ENCODE measurements at regions of chr11 and their contacts with region 1.

Region 1: GRCh38 chr11:132414451-132414850 is 1044.0 kb downstream of the NTM start:
- DNase-seq: no peak
- H3K4me3 ChIP-seq: no peak overlapping the region
- CTCF ChIP-seq: no peak

Region 2: DNA sequence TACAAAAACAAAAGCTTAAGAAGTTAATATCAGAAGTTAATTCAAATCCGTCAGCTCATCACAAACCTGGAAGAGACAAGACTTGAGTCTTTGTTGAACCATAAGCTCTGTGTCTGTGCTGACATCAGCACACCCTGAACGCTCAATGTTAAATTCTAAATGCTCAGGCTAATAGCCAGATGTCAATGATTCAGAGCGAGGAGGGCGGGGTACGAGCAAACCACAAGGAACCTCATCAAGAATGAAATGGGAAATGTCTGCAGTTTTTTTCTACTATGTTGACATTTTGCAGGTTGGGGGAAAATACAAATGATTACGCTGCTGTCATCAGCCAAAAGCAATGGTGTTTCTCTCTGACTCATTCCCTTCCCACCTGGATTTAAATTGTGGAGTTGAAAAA is 13.2 kb after region 1 on chr11:
- CTCF ChIA-PET with region 1: interaction called, 11 read pairs
- POLR2A ChIA-PET with region 1: interaction called, 5 read pairs
- DNase-seq: peak; percentile 44
- H3K4me3 ChIP-seq: no peak overlapping the region
- CTCF ChIP-seq: no peak

Region 3: DNA sequence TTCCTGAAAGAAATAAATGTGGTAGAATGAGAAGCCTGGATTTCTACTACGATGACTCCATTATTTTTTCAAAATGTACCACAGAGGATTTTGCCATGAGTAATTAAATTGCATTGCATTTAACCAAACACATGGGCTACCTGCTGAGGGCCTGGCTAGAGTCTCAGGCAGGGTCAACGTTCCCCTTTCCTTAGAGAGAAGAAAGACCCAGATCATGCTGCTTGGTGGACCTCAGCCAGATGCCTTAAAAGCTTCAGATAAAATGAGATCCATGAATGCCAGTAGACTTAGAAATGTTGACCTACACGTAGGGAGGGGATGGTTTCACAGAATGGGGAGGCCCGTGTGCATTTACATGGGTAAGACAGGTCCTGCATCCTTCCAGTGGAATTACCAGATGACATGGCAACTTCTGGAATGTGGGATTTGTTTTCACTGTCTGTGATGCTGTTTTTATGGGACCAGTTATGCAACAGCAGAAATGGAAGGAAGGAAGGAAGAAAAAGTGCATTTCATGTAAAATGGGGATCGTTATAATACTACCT is 25.3 kb after region 1 on chr11:
- CTCF ChIA-PET with region 1: no interaction called
- POLR2A ChIA-PET with region 1: no interaction called
- DNase-seq: no peak
- H3K4me3 ChIP-seq: no peak overlapping the region
- CTCF ChIP-seq: no peak